Heart left ventricle (tissue), 16 donors: ENCODE measurements at regions of chr16 and their contacts with region 1.

Region 1: GRCh38 chr16:20849587-20850390 is 43.5 kb downstream of the REXO5 start:
- DNase-seq: peak; percentile 45 to 67 (median 60)
- ATAC-seq: peak in 1 of 4 donors; percentile 32
- H3K4me3 ChIP-seq: no peak overlapping the region
- H3K27ac ChIP-seq: peak overlapping the region; percentile 53 to 88 (median 79)
- H3K4me1 ChIP-seq: peaks cover 9 to 65% (median 46%) of the 10 kb centered on the region in 12 donors
- H3K27me3 ChIP-seq: no peaks in the 10 kb centered on the region
- CTCF ChIP-seq: peak; percentile 93 to 99 (median 98)
- POLR2A ChIP-seq: no peak

Region 2: GRCh38 chr16:20900299-20901067 is 50.7 kb after region 1 on chr16 and contains the starts of genes DCUN1D3 and LYRM1:
- intact Hi-C with region 1: loop called (anchors 1 to 5 kb)
- DNase-seq: peak; percentile 96 to 98 (median 97)
- ATAC-seq: peak; percentile 92 to 96 (median 93)
- H3K4me3 ChIP-seq: peak within 1 kb of the TSS; percentile 68 to 93 (median 80)
- H3K27ac ChIP-seq: peak within 1 kb of the TSS; percentile 95 to 99 (median 97)
- H3K4me1 ChIP-seq: peaks cover 17 to 70% (median 55%) of the 10 kb centered on the region in 12 donors
- H3K27me3 ChIP-seq: no peaks in the 10 kb centered on the region
- CTCF ChIP-seq: no peak
- POLR2A ChIP-seq: peak in 1 of 2 donors; percentile 93
- total RNA-seq, gene DCUN1D3: 8.3 to 21.4 (median 11.0) TPM
- total RNA-seq, gene LYRM1: 40.2 to 124 (median 54.6) TPM

Region 3: DNA sequence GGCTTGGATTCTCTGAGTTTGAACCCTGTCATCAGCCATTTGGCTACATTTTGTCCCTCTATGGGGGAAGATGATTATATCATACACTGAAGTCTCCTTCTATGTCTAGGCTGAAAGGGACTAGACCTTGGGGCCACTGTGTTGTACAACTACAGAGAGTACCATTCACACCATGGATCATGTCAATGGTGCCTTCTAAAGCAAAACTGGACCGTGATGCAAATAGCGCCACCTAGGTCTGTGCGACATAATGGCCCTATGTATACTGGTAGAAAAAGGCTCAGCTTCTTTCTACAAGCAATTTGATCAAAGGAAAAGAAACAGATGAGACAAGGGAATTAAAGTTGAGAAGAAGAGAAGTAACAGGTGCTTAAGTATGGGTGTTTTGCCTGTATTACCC is 151.5 kb after region 1 on chr16:
- intact Hi-C with region 1: loop called in 2 of 10 experiments (anchors 5 to 10 kb)
- DNase-seq: no peak
- ATAC-seq: peak in 1 of 4 donors; percentile 46
- H3K4me3 ChIP-seq: no peak overlapping the region
- H3K27ac ChIP-seq: no peak overlapping the region
- H3K4me1 ChIP-seq: no peaks in the 10 kb centered on the region
- H3K27me3 ChIP-seq: no peaks in the 10 kb centered on the region
- CTCF ChIP-seq: peak in 10 of 12 donors; percentile 9 to 44 (median 28)
- POLR2A ChIP-seq: no peak

Region 4: DNA sequence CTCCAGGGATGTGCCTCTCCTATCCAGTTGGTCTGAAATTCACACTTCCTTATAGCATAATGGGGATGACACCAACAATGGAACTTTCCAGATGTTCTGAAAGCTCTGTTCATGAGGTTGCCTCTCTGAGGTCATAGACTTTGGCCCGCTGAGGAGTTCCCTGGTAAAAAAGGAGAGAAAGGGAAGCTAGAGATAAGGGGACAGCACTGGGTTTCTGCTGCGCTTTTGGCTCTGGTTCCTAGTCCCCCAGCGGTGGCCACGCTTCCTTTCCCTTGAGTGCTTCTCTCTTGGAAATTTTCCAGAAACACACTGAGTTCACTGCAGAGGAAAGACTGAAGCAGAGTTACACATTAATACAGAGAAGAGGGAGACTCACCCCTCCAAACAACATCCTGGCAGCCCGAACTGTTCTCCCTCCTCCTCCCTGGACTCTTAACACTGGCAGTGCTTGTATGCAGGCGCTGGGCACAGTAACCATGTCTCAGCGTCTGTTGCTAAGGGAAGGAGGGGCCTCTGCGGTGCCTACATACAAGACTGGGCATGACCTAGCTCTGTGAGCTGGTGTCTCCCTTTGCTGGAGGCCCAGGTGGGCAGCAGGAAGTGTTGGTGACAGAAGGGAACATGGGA is 300.7 kb after region 1 on chr16 and contains the start of gene DNAH3:
- intact Hi-C with region 1: loop called in 2 of 10 experiments (anchors 5 kb)
- DNase-seq: peak in 1 of 5 donors; percentile 36
- ATAC-seq: peak; percentile 47 to 82 (median 67)
- H3K4me3 ChIP-seq: no peak within 1 kb of the TSS
- H3K27ac ChIP-seq: no peak within 1 kb of the TSS
- H3K4me1 ChIP-seq: peaks cover 0 to 10% (median 5%) of the 10 kb centered on the region in 12 donors
- H3K27me3 ChIP-seq: peaks cover 0 to 4% (median 0%) of the 10 kb centered on the region in 9 donors
- CTCF ChIP-seq: no peak
- POLR2A ChIP-seq: no peak
- total RNA-seq, gene DNAH3: 0.30 to 2.0 (median 0.97) TPM

Region 5: DNA sequence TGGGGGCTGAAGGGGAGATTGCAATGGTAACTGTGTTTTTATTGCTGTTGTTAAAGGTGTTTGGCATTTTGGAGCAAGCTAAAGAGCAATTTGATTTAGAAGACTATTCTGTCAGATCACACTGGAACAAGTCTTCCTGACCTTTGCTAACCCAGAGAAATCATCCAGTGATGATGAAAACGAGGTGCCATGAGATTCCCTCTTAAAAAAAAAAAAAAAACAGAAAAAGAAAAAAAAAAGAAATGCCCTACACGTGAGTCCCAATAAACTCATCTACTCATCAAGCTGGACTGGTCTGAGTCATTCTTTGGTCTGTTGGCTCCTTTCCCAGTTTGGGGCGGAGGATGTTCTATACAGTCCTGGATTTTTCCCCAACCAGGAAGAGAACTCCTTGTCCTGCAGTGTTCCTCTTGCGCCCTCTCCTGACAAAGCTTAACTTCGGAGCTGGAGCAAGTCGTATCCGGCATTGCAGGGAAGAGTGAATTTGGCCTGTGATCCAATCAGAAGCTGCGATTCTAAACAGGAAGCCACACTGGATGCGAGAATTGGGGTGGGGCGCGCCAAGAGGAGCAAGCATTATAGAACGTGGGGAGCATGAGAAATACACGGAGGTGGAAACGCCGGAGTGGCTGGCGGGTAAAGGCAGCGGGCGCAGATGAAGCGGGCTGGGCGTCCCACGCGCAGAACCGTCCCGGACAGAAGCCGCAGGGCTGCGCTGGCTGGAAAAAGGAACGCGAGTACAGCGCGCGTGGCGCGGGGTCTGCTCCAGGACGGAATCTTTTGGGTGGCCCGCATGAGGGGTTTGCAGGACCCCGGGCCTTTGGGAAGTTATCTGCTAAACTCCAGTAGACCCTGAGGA is 450.7 kb after region 1 on chr16:
- intact Hi-C with region 1: loop called in 1 of 10 experiments (anchors 10 kb)
- DNase-seq: peak; percentile 82 to 96 (median 95)
- ATAC-seq: peak; percentile 94 to 98 (median 96)
- H3K4me3 ChIP-seq: peak overlapping the region; percentile 52 to 78 (median 67)
- H3K27ac ChIP-seq: peak overlapping the region; percentile 48 to 88 (median 70)
- H3K4me1 ChIP-seq: peaks cover 0 to 19% (median 9%) of the 10 kb centered on the region in 12 donors
- H3K27me3 ChIP-seq: peaks cover 0 to 9% (median 0%) of the 10 kb centered on the region in 9 donors
- CTCF ChIP-seq: peak; percentile 63 to 95 (median 82)
- POLR2A ChIP-seq: peak in 1 of 2 donors; percentile 39